Activated CD4-positive, alpha-beta T cell treated with anti-CD3 and anti-CD28 coated beads for 36 hours (primary cell): ENCODE measurements at regions of chr11 and their contacts with region 1.

Region 1: DNA sequence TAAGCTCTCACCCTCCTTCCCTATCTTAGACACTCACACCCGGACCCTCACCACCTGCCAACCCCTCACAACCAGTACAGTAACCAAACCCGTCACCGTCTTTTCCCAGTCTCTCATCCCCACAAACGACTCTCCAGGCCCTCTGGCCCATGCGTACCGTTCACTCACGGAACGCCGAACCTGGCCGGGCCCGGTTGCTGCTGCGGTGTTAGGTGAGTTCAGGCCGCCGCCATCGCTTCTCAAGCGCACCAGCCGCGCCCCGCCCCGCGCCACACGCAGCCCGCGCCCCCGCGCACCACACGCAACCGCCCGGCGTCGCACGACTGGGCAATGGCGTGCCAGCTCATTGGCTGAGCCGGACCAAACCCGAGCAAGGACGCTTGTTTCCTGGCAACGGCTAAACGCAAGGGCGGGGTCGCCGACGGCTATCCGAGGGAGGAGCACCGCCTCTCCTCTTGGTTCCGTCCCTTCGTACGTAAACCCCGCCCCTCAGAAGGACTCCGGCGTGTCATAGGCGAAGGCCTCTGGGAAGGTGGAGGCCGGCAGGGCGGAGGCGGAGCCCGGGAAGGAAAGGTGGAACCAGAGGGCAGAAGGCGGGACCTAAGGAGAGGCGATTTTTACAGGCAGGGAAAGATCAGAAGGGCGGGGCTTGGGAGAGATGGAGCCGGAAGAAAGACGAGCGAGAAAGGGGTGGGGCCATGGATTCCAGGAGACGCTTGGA is at the start of gene FHIP1B:
- DNase-seq: peak; percentile 100
- ATAC-seq: peak; percentile 95
- H3K4me3 Mint-ChIP-seq: peak within 1 kb of the TSS; percentile 95
- H3K27ac Mint-ChIP-seq: peak within 1 kb of the TSS; percentile 93
- H3K4me1 Mint-ChIP-seq: peaks cover 39% of the 10 kb centered on the region
- H3K27me3 Mint-ChIP-seq: no peaks in the 10 kb centered on the region
- total RNA-seq, gene FHIP1B: 17.0 to 17.1 TPM

Region 2: GRCh38 chr11:5684646-5685362 is 549.7 kb before region 1 on chr11 and contains the start of gene TRIM5:
- CTCF ChIA-PET with region 1: interaction called, 3 read pairs
- POLR2A ChIA-PET with region 1: no interaction called
- intact Hi-C with region 1: loop called (anchors 2 to 10 kb)
- DNase-seq: peak; percentile 90
- ATAC-seq: peak; percentile 84
- H3K4me3 Mint-ChIP-seq: peak within 1 kb of the TSS; percentile 84
- H3K27ac Mint-ChIP-seq: peak within 1 kb of the TSS; percentile 93
- H3K4me1 Mint-ChIP-seq: peaks cover 43% of the 10 kb centered on the region
- H3K27me3 Mint-ChIP-seq: no peaks in the 10 kb centered on the region
- total RNA-seq, gene TRIM5: 16.4 to 17.9 TPM

Region 3: GRCh38 chr11:6084587-6084986 is 150.0 kb before region 1 on chr11:
- CTCF ChIA-PET with region 1: no interaction called
- POLR2A ChIA-PET with region 1: no interaction called
- intact Hi-C with region 1: no loop called
- DNase-seq: no peak
- ATAC-seq: no peak
- H3K4me3 Mint-ChIP-seq: no peak overlapping the region
- H3K27ac Mint-ChIP-seq: no peak overlapping the region
- H3K4me1 Mint-ChIP-seq: no peaks in the 10 kb centered on the region
- H3K27me3 Mint-ChIP-seq: peaks cover 3% of the 10 kb centered on the region

Region 4: GRCh38 chr11:6353367-6353987 is 118.9 kb after region 1 on chr11:
- CTCF ChIA-PET with region 1: interaction called, 10 read pairs
- POLR2A ChIA-PET with region 1: no interaction called
- intact Hi-C with region 1: loop called in 1 of 2 experiments (anchors 1 kb)
- DNase-seq: peak; percentile 71
- ATAC-seq: peak; percentile 45
- H3K4me3 Mint-ChIP-seq: no peak overlapping the region
- H3K27ac Mint-ChIP-seq: no peak overlapping the region
- H3K4me1 Mint-ChIP-seq: peaks cover 25% of the 10 kb centered on the region
- H3K27me3 Mint-ChIP-seq: peaks cover 3% of the 10 kb centered on the region

Region 5: DNA sequence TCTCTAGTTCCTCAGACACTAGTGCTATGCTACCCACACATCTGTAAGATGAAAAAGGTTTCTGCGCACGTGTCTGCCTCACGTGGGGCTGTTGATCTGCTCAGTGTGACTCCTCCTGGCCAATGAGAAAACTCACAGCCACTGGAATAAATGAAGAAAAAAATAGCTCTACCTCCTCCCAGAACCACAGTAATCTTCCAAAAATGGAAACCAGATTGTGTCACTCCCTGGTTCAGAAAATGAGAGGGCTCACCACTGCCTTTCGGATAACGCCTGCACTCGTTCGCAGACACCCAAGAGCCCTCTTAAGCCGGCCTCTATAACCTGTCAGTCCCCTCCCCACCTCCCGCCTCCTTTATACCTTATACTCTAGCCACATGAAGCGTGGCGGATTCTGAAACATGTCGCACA is 179.2 kb after region 1 on chr11:
- CTCF ChIA-PET with region 1: no interaction called
- POLR2A ChIA-PET with region 1: no interaction called
- intact Hi-C with region 1: loop called in 1 of 2 experiments (anchors 1 kb)
- DNase-seq: peak; percentile 88
- ATAC-seq: peak; percentile 86
- H3K4me3 Mint-ChIP-seq: no peak overlapping the region
- H3K27ac Mint-ChIP-seq: no peak overlapping the region
- H3K4me1 Mint-ChIP-seq: peaks cover 30% of the 10 kb centered on the region
- H3K27me3 Mint-ChIP-seq: no peaks in the 10 kb centered on the region

Region 6: GRCh38 chr11:6603287-6604080 is 368.9 kb after region 1 on chr11 and contains the starts of genes ILK and RRP8:
- CTCF ChIA-PET with region 1: no interaction called
- POLR2A ChIA-PET with region 1: no interaction called
- intact Hi-C with region 1: loop called in 1 of 2 experiments (anchors 1 kb)
- DNase-seq: peak; percentile 93
- ATAC-seq: peak; percentile 70
- H3K4me3 Mint-ChIP-seq: no peak within 1 kb of the TSS
- H3K27ac Mint-ChIP-seq: no peak within 1 kb of the TSS
- H3K4me1 Mint-ChIP-seq: peaks cover 37% of the 10 kb centered on the region
- H3K27me3 Mint-ChIP-seq: no peaks in the 10 kb centered on the region
- total RNA-seq, gene ILK: 85.6 to 89.0 TPM
- total RNA-seq, gene RRP8: 34.4 to 35.0 TPM

Region 7: GRCh38 chr11:6746086-6746618 is 511.6 kb after region 1 on chr11:
- CTCF ChIA-PET with region 1: no interaction called
- POLR2A ChIA-PET with region 1: no interaction called
- intact Hi-C with region 1: loop called in 1 of 2 experiments (anchors 10 kb)
- DNase-seq: peak; percentile 58
- ATAC-seq: peak; percentile 85
- H3K4me3 Mint-ChIP-seq: no peak overlapping the region
- H3K27ac Mint-ChIP-seq: no peak overlapping the region
- H3K4me1 Mint-ChIP-seq: peaks cover 30% of the 10 kb centered on the region
- H3K27me3 Mint-ChIP-seq: no peaks in the 10 kb centered on the region